ENCODE measurements at regions of chr11 and their contacts with region 1.

Region 1: DNA sequence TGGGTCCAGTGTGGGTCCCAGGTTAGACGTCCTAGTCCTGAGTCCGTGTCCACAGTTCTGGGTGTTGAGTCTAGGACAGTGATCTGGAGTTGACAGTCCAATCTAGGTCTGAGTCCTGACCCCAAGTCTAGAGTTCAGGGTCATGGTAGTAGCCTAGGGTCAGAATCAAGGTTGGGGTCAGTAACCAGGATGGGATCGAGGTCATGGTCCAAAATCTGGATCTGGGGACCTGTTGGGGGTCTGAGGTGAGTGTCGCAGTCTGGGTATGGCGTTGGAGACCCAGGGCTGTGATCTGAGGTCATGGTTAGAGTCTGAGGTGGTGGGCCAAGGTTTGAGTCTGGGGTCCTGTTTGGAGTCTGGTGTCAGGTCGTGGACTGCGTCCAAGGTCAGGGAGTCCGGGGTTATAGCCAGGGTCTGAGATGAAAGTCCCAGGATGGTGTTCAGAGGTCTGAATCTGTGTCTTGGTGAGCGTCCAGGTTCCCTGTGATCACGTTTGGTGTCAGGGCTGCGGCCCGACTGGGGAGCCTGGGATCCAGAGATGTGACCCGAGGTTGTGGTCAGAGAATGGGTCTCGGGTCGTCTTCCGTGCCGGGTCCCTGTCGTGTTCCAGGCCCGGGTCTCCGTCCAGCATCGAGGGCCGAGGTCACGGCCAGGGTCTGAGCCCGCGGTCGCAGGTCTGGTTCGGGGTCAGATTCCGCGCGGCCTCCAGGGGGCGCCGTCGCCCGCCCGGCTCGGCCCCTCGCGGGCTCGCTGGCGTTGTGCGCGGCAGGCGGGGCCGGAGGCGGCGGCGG is 445 bp upstream of the GRK2 start:
- DNase-seq: peak; percentile 84
- H3K4me3 Mint-ChIP-seq: peak overlapping the region; percentile 63
- H3K27ac Mint-ChIP-seq: peak overlapping the region; percentile 80
- H3K4me1 Mint-ChIP-seq: peaks cover 72% of the 10 kb centered on the region
- H3K27me3 Mint-ChIP-seq: no peaks in the 10 kb centered on the region

Region 2: DNA sequence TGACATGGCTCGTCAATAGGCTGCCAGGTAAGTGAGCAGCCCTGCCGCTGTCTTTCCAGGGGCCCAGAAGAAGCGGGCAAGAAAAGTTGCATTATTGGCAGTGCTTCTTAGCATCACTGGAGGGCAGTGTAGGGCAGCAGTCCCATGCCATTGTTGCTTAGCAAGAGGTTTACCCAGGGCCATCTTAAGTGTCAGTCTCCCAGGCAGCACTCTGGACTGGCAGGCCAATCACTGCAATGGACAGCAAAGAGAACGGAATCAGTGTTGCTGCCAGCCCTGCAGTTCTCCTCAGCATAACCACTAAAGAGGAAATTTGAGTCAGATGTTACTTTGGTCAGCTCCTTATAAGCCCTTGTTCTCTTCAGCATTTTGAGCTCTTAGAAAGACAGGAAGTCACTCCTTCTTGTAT is 13.0 kb before region 1 on chr11:
- CTCF ChIA-PET with region 1: interaction called, 36 read pairs
- POLR2A ChIA-PET with region 1: interaction called, 6 read pairs
- intact Hi-C with region 1: no loop called
- DNase-seq: peak; percentile 49
- H3K4me3 Mint-ChIP-seq: no peak overlapping the region
- H3K27ac Mint-ChIP-seq: peak overlapping the region; percentile 61
- H3K4me1 Mint-ChIP-seq: peaks cover 39% of the 10 kb centered on the region
- H3K27me3 Mint-ChIP-seq: no peaks in the 10 kb centered on the region

Region 3: DNA sequence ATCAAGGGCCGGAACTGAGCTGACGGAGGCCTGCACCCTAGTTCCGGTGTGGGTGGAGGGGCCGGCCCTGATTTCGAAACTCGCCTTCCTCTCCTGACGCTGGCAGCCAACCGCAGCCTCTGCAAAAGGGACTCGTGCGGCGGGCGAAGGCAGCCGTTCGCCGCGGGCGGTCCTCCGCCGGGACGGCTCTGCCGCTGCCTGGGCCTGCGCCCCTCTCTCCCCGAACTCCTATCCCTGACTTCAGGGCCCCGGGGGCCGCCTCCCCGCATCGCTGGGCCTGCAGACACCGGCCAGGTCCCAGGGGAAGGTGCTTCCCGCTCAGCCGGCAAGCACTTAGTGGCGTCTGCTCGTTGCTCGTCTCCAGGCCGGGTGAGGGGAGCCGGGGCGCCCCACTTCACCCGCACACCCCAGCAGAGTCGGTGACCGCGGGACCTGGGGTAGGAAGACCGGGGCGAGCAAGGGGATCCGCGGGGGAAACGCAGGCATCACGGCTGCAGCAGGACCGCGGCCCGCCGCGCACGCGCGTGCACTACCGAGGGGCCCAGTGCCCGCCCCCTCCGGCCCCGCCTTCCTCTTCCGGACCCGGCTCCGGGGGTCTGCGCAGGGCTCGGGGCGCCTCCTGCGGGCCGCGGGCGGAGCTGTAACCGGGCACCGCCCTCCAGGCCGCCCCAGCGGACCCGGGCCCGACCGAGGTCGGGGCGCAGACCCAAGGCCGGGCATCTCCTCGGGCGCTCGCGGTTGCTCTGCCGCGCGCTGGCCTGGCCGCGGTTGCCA is 22.8 kb after region 1 on chr11:
- CTCF ChIA-PET with region 1: interaction called, 24 read pairs
- POLR2A ChIA-PET with region 1: interaction called, 72 read pairs
- intact Hi-C with region 1: loop called (anchors 1 kb)
- DNase-seq: peak; percentile 95
- H3K4me3 Mint-ChIP-seq: peak overlapping the region; percentile 66
- H3K27ac Mint-ChIP-seq: peak overlapping the region; percentile 97
- H3K4me1 Mint-ChIP-seq: peaks cover 62% of the 10 kb centered on the region
- H3K27me3 Mint-ChIP-seq: no peaks in the 10 kb centered on the region

Region 4: DNA sequence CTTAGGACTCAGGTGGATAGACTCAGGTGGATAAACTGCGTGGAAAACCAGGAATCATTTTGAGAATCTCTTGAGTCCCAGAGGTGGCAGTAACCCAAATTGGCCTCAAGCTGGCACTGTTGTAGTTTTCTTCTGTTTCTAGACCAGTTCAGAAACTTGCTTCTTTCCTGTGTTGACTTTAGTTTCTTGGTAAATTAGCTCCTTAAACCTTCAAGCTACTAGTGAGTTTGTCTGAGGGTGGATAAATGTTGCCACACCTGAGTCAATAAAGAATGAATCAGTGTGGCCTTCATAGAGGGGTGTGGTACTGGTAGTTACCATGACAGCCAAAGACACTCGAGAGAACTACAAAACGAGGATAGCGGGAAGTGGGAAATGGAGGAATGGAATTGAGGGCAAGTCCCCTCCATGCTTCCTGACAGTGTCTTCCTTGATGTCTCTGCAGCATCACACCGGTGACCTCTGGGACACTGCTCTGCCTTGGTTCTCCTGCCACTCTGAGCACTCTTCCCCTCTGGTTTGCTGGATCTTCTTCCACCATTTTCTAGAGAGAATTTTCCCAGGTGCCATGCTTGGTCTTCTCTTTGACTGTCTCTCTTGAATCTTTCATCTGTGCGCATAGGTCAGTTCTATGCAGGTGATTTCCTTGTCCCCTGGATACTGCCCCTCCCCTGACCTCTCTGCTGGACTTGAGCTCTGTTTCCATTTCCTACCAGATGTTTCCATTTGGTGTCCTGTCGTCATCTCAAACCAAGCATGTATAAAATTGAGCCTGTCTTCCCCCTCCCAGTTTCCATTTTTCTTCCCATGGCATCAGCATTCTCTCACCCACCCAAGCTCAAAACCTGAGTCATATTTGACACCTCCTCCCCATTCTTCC is 80.3 kb after region 1 on chr11:
- CTCF ChIA-PET with region 1: interaction called, 39 read pairs
- POLR2A ChIA-PET with region 1: interaction called, 5 read pairs
- intact Hi-C with region 1: no loop called
- DNase-seq: peak; percentile 49
- H3K4me3 Mint-ChIP-seq: no peak overlapping the region
- H3K27ac Mint-ChIP-seq: peak overlapping the region; percentile 83
- H3K4me1 Mint-ChIP-seq: peaks cover 47% of the 10 kb centered on the region
- H3K27me3 Mint-ChIP-seq: no peaks in the 10 kb centered on the region

Region 5: DNA sequence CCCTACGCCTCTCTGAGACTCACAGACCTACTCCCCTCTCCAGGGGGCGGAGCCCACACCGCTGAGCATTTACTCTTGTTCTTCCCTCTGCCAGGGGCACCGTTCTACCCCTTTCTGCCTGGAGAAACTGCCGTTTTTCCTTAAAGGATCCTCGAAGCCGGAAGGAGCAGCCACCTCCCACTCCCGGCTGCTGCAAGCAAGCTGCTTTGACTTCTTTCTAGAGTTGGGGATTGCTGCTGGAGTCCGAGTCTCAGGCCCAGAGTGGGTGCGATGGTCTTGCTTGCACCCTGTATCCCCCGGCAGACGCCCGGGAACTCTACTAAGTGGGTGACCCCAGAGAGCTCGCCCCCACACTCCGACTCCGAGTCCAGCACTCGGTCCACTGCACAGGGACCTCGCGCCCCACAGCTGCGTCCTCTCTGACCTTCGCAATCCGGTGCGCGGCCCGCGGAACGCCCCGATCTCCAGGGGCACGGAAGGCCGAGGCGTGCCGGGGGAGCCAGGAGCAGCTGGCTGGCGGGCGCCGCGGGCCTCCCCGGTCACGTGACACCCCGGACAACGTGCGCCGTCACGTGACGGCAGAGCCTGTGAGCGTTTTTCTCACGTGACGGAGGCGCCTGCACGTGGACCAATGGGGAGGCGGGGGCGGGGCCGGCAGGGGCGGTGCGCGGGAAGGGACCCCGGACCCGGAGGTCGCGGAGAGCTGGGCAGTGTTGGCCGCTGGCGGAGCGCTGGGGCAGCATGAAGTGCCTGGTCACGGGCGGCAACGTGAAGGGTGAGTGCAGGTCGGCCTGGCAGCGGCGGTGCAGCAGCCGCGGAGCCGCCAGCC is 125.7 kb after region 1 on chr11 and contains the start of gene RAD9A:
- CTCF ChIA-PET with region 1: no interaction called
- POLR2A ChIA-PET with region 1: no interaction called
- intact Hi-C with region 1: no loop called
- DNase-seq: peak; percentile 95
- H3K4me3 Mint-ChIP-seq: peak within 1 kb of the TSS; percentile 92
- H3K27ac Mint-ChIP-seq: peak within 1 kb of the TSS; percentile 76
- H3K4me1 Mint-ChIP-seq: peaks cover 33% of the 10 kb centered on the region
- H3K27me3 Mint-ChIP-seq: no peaks in the 10 kb centered on the region
- total RNA-seq, gene RAD9A: 31.0 to 39.1 TPM

Region 6: GRCh38 chr11:67482825-67483798 is 217.3 kb after region 1 on chr11 and contains the start of gene AIP:
- CTCF ChIA-PET with region 1: no interaction called
- POLR2A ChIA-PET with region 1: no interaction called
- intact Hi-C with region 1: loop called (anchors 5 kb)
- DNase-seq: peak; percentile 99
- H3K4me3 Mint-ChIP-seq: peak within 1 kb of the TSS; percentile 90
- H3K27ac Mint-ChIP-seq: peak within 1 kb of the TSS; percentile 99
- H3K4me1 Mint-ChIP-seq: peaks cover 42% of the 10 kb centered on the region
- H3K27me3 Mint-ChIP-seq: no peaks in the 10 kb centered on the region
- total RNA-seq, gene AIP: 160 to 169 TPM

Region 7: DNA sequence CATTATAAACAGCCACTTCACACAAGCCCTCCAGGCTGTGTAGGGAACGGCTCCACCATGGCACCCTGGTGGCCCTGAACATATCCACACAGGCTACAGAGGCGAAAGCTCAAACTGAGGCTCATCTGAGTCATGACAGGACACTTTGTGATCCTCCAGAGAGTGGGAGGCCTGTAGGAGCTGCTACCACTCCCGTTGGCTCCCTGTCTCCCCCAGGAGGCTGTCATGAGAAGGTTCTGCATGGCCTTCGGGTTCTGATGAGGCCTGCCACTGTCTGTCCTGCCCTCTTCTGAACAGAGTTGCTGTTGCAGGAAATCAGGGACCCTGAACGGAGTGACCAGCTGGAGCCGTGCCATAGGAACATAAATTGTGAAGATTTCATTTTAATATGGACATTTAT is 432.4 kb after region 1 on chr11:
- CTCF ChIA-PET with region 1: no interaction called
- POLR2A ChIA-PET with region 1: no interaction called
- intact Hi-C with region 1: no loop called
- DNase-seq: peak; percentile 38
- H3K4me3 Mint-ChIP-seq: no peak overlapping the region
- H3K27ac Mint-ChIP-seq: no peak overlapping the region
- H3K4me1 Mint-ChIP-seq: no peaks in the 10 kb centered on the region
- H3K27me3 Mint-ChIP-seq: peaks cover 13% of the 10 kb centered on the region

Measured in activated CD4-positive, alpha-beta memory T cell treated with anti-CD3 and anti-CD28 coated beads for 36 hours (primary cell).